Psoas muscle (tissue), 8 donors: ENCODE measurements at regions of chr2 and their contacts with region 1.

Region 1: GRCh38 chr2:67712484-67712883 is 315.4 kb downstream of the ETAA1 start:
- DNase-seq: no peak
- ATAC-seq: no peak
- H3K4me3 ChIP-seq: no peak overlapping the region
- H3K27ac ChIP-seq: no peak overlapping the region
- H3K4me1 ChIP-seq: no peaks in the 10 kb centered on the region
- H3K27me3 ChIP-seq: no peaks in the 10 kb centered on the region
- CTCF ChIP-seq: no peak

Region 2: GRCh38 chr2:67399831-67400489 is 312.5 kb before region 1 on chr2:
- intact Hi-C with region 1: no loop called
- DNase-seq: no peak
- ATAC-seq: no peak
- H3K4me3 ChIP-seq: no peak overlapping the region
- H3K27ac ChIP-seq: no peak overlapping the region
- H3K4me1 ChIP-seq: peaks cover 4% of the 10 kb centered on the region
- H3K27me3 ChIP-seq: no peaks in the 10 kb centered on the region
- CTCF ChIP-seq: no peak

Region 3: DNA sequence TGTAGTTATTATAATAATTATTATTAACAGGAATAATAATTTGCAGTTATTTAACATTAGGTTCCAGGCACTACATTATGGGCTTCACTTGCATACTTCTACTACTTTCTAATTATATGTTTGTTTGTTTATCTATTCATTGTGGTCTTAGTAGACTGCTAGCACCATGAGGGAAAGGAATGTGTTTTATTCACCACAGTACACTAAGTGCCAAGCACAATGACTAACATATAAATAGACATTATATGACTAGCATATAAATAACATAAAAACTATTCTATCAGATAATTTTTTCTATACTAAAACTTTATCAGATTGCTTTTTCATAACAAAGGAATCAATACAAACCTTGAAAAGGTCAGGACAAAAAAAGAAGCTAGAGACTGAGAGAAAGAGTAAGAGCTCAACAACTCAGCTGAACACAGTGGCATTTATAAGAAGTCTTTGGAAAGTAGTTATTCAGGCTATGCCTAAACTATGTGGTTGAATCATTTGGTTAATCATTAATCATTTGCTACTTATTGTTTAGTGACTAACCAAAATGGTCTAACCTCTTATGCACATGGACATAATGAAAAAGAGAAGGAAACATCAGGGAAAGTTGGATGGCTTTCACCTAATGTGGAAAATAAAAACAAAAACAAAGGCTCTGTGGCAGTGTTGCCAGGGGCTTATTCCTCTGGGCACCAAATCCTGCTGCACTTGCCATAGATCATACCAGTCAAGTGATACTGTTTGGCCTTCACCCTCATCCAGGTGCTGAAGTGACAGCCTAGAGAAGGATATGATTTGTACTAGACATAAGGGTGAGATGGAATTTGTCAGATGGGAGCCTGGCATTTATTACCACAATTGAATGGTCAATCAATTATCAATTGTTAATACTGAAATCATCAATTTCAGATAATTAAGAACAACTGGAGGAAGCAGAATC is 140.4 kb before region 1 on chr2:
- intact Hi-C with region 1: no loop called
- DNase-seq: no peak
- ATAC-seq: peak in 1 of 4 donors; percentile 59
- H3K4me3 ChIP-seq: no peak overlapping the region
- H3K27ac ChIP-seq: no peak overlapping the region
- H3K4me1 ChIP-seq: peaks cover 8% of the 10 kb centered on the region
- H3K27me3 ChIP-seq: no peaks in the 10 kb centered on the region
- CTCF ChIP-seq: no peak

Region 4: GRCh38 chr2:67666386-67667053 is 46.0 kb before region 1 on chr2:
- intact Hi-C with region 1: no loop called
- DNase-seq: peak in 1 of 2 donors; percentile 73
- ATAC-seq: peak; percentile 65 to 86 (median 74)
- H3K4me3 ChIP-seq: no peak overlapping the region
- H3K27ac ChIP-seq: peak overlapping the region; percentile 79
- H3K4me1 ChIP-seq: peaks cover 40% of the 10 kb centered on the region
- H3K27me3 ChIP-seq: no peaks in the 10 kb centered on the region
- CTCF ChIP-seq: no peak

Region 5: GRCh38 chr2:67684991-67685390 is 27.5 kb before region 1 on chr2:
- intact Hi-C with region 1: loop called in 1 of 2 experiments (anchors 1 kb)
- DNase-seq: no peak
- ATAC-seq: peak in 1 of 4 donors; percentile 43
- H3K4me3 ChIP-seq: no peak overlapping the region
- H3K27ac ChIP-seq: no peak overlapping the region
- H3K4me1 ChIP-seq: no peaks in the 10 kb centered on the region
- H3K27me3 ChIP-seq: peaks cover 0 to 3% (median 0%) of the 10 kb centered on the region in 3 donors
- CTCF ChIP-seq: no peak